PC-9 (cell line): ENCODE measurements at regions of chr7 and their contacts with region 1.

Region 1: GRCh38 chr7:35037526-35038339 is 448 bp upstream of the DPY19L1 start:
- DNase-seq: peak; percentile 83 to 98
- H3K4me3 ChIP-seq: peak overlapping the region; percentile 90
- H3K27ac ChIP-seq: peak overlapping the region; percentile 58
- H3K4me1 ChIP-seq: peaks cover 27% of the 10 kb centered on the region
- H3K27me3 ChIP-seq: no peaks in the 10 kb centered on the region
- CTCF ChIP-seq: peak; percentile 95

Region 2: DNA sequence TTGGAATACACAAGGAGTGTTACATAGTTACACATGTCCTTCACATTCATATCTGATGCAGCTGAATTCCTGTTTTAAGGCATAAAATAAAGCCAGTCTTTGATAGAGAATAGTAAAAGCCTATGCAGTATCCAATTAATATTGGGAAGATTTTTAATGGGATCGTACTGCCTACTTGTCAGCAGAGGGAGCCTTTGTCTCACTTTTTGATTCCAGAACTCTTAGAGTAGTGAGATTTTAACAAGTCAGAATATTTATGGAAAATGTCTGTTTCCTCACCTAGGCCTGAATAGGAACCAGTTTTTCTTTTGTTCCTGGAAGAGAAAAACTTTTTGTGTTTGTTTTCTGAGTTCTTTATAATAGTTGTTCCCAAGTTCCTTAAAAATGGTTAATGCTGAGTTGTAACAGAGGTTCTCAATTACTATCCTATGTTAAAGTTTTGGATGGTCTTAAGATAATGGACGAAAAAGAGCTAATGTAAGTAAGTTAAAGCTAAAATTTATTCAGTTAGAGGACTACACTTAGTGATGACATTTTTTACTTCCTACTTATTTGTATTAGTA is 1794.3 kb before region 1 on chr7:
- CTCF ChIA-PET with region 1: no interaction called
- POLR2A ChIA-PET with region 1: no interaction called
- intact Hi-C with region 1: loop called (anchors 10 kb)
- DNase-seq: peak in 1 of 2 experiments; percentile 47
- H3K4me3 ChIP-seq: no peak overlapping the region
- H3K27ac ChIP-seq: no peak overlapping the region
- H3K4me1 ChIP-seq: no peaks in the 10 kb centered on the region
- H3K27me3 ChIP-seq: no peaks in the 10 kb centered on the region
- CTCF ChIP-seq: peak; percentile 91

Region 3: GRCh38 chr7:34321000-34321581 is 716.6 kb before region 1 on chr7:
- CTCF ChIA-PET with region 1: no interaction called
- POLR2A ChIA-PET with region 1: no interaction called
- intact Hi-C with region 1: loop called (anchors 2 kb)
- DNase-seq: peak; percentile 71 to 80
- H3K4me3 ChIP-seq: peak overlapping the region; percentile 43; the same call in 1 of the 2 replicates
- H3K27ac ChIP-seq: peak overlapping the region; percentile 35; the same call in 1 of the 2 replicates
- H3K4me1 ChIP-seq: peaks cover 19% of the 10 kb centered on the region
- H3K27me3 ChIP-seq: no peaks in the 10 kb centered on the region
- CTCF ChIP-seq: peak; percentile 98

Region 4: DNA sequence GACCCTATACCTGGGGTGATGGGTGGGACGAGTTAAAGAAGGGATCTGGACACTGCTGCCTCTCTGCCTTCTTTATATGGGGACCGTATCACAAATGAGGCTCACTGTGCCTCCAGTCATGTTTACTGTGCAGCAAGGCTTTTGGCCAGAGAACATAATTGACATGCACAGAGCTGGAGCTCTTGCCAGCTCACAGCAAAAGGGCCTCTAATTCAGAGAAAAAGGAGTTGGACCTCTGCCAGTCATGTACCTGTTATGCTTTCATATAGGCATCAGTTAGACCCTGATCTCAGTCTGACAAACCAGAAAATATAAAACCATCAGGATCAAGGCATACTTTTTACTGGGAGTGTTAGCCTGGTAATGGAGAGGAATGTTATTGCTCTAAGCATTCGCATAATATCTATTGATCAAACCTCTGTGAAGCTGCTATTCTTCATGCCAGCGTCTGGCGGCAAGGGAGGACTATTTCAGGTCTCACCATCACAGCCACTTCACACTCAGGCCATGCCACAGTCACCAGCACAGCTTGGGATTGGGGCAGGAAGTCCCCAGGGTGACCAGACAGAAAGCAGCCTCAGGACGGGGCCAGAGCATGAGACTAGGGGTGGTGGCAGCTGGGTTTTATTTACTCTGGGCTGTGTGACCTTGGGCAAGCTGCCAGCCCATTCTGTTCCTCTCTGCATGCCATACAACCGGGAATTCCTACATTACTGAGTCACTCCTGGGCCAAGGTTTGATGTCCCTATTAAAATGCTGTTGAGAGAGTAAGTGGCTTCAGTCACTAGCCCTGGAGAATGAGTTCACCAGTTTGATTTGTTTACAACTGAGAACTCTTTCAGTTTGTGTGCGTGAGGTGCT is 289.6 kb before region 1 on chr7:
- CTCF ChIA-PET with region 1: interaction called, 11 read pairs
- POLR2A ChIA-PET with region 1: no interaction called
- intact Hi-C with region 1: loop called (anchors 2 kb)
- DNase-seq: peak; percentile 95 to 99
- H3K4me3 ChIP-seq: peak overlapping the region; percentile 4; the same call in 1 of the 2 replicates
- H3K27ac ChIP-seq: peak overlapping the region; percentile 63
- H3K4me1 ChIP-seq: peaks cover 29% of the 10 kb centered on the region
- H3K27me3 ChIP-seq: no peaks in the 10 kb centered on the region
- CTCF ChIP-seq: peak; percentile 44; the same call in 1 of the 2 replicates

Region 5: GRCh38 chr7:34823640-34824258 is 214.0 kb before region 1 on chr7:
- CTCF ChIA-PET with region 1: interaction called, 8 read pairs
- POLR2A ChIA-PET with region 1: interaction called, 8 read pairs
- intact Hi-C with region 1: loop called (anchors 1 kb)
- DNase-seq: peak; percentile 58 to 66
- H3K4me3 ChIP-seq: no peak overlapping the region
- H3K27ac ChIP-seq: no peak overlapping the region
- H3K4me1 ChIP-seq: peaks cover 14% of the 10 kb centered on the region
- H3K27me3 ChIP-seq: no peaks in the 10 kb centered on the region
- CTCF ChIP-seq: peak; percentile 99

Region 6: GRCh38 chr7:35003679-35004303 is 33.9 kb before region 1 on chr7:
- CTCF ChIA-PET with region 1: no interaction called
- POLR2A ChIA-PET with region 1: interaction called, 3 read pairs
- intact Hi-C with region 1: loop called (anchors 2 kb)
- DNase-seq: peak; percentile 88 to 99
- H3K4me3 ChIP-seq: peak overlapping the region; percentile 28; the same call in 1 of the 2 replicates
- H3K27ac ChIP-seq: peak overlapping the region; percentile 94
- H3K4me1 ChIP-seq: peaks cover 45% of the 10 kb centered on the region
- H3K27me3 ChIP-seq: no peaks in the 10 kb centered on the region
- CTCF ChIP-seq: no peak

Region 7: DNA sequence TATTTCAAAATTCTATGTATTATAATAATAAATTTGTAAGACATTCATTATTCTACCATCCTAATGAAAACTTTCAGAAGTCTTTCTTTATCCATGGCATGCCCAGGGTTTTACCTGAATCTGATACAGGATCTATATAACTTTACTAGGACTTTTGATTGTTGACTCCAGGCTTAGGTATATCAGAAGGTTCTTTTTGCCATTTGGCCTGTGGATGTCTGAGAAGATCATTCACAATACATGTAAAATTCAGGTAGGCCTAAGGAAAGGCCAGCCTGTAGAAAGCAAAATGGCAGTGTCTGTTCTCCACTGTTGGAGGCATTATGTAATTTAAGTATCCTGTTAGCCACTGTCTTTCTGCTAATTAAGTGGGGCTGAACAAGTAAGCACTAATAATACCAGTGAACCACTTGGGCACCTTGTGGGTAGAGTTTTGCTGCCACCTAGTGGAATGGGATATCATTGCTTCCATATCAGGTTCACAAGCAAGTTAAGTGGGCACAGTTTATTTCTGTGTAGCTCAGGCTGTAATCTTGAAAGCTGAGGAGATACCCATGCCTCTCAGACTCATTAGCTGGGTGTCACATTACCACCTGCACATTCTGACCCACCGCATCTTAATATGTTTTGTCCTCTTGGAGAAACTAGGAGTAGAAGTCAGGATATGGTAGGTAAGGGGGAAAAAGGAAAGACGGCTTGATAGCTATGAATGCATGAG is 868.6 kb after region 1 on chr7:
- CTCF ChIA-PET with region 1: interaction called, 11 read pairs
- POLR2A ChIA-PET with region 1: no interaction called
- intact Hi-C with region 1: no loop called
- DNase-seq: peak; percentile 69 to 72
- H3K4me3 ChIP-seq: no peak overlapping the region
- H3K27ac ChIP-seq: no peak overlapping the region
- H3K4me1 ChIP-seq: no peaks in the 10 kb centered on the region
- H3K27me3 ChIP-seq: no peaks in the 10 kb centered on the region
- CTCF ChIP-seq: peak; percentile 97